KBM-7 (cell line): ENCODE measurements at regions of chr11 and their contacts with region 1.

Region 1: GRCh38 chr11:2892215-2893020 is 6.8 kb upstream of the CDKN1C start:
- DNase-seq: peak; percentile 87

Region 2: GRCh38 chr11:2433106-2433925 is 459.1 kb before region 1 on chr11:
- in situ Hi-C with region 1: loop called (anchors 10 kb)
- DNase-seq: no peak

Region 3: GRCh38 chr11:2532704-2533586 is 359.5 kb before region 1 on chr11:
- in situ Hi-C with region 1: loop called (anchors 10 kb)
- DNase-seq: peak; percentile 96